Activated naive CD8-positive, alpha-beta T cell treated with anti-CD3 and anti-CD28 coated beads, Interleukin-2, amount 10 ng/mL, durations not matched to agents 7 days and 5 days (primary cell): ENCODE measurements at regions of chr5 and their contacts with region 1.

Region 1: DNA sequence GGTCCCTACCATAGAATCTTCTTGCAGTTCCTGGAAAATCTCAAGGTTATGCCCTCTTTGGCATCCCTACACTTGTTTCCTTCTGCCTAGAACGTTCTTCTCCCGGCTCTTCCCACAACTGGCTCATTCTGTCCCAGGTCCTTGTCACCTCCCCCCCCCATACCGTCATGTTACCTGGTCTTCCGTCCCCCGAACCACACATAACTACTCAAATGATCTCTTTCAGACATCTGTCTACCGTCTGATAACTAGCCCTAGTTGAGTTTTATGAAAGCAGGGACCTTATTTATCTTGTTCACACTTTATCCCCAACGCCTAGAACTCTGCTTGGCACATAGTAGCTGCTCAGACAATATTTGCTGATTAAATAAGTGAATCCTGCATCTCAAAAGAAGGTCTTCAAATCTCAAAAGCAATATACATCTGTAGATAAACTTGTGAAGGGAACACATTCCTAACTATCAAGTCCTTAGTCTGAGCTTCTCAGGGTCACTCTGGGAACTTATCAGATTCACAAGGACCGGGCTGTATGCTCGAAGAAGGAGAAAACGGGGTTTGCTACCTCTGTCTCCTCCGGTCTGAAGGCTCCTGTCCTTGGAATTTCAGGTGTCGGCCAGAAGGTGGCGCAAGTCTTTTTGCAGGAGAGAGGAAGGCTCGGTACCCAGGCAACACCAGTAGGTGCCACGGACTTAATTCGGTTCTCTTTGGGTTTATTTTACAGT is 30.0 kb downstream of the LCP2 start:
- DNase-seq: peak; percentile 79
- ATAC-seq: peak; percentile 44
- H3K4me3 Mint-ChIP-seq: peak overlapping the region; percentile 75
- H3K27ac Mint-ChIP-seq: peak overlapping the region; percentile 92
- H3K4me1 Mint-ChIP-seq: peaks cover 85% of the 10 kb centered on the region
- H3K27me3 Mint-ChIP-seq: no peaks in the 10 kb centered on the region

Region 2: GRCh38 chr5:170247363-170247762 is 20.2 kb before region 1 on chr5:
- POLR2A ChIA-PET with region 1: interaction called, 11 read pairs
- DNase-seq: no peak
- ATAC-seq: no peak
- H3K4me3 Mint-ChIP-seq: no peak overlapping the region
- H3K27ac Mint-ChIP-seq: no peak overlapping the region
- H3K4me1 Mint-ChIP-seq: peaks cover 15% of the 10 kb centered on the region
- H3K27me3 Mint-ChIP-seq: no peaks in the 10 kb centered on the region

Region 3: GRCh38 chr5:170302653-170303501 is 35.3 kb after region 1 on chr5:
- POLR2A ChIA-PET with region 1: interaction called, 1,094 read pairs
- DNase-seq: peak; percentile 75
- ATAC-seq: peak; percentile 93
- H3K4me3 Mint-ChIP-seq: peak overlapping the region; percentile 94
- H3K27ac Mint-ChIP-seq: peak overlapping the region; percentile 99
- H3K4me1 Mint-ChIP-seq: peaks cover 55% of the 10 kb centered on the region
- H3K27me3 Mint-ChIP-seq: no peaks in the 10 kb centered on the region